Activated T-helper 2 cell treated with anti-CD3 and anti-CD28 coated beads, Interferon-gamma antibody, Interleukin-2, Interleukin-4, amounts not matched to agents 10 μg/mL and 5 μg/mL and 100 μg/mL, durations not matched to agents 14 hours and 24 hours and 36 hours (primary cell): ENCODE measurements at regions of chr1 and their contacts with region 1.

Region 1: DNA sequence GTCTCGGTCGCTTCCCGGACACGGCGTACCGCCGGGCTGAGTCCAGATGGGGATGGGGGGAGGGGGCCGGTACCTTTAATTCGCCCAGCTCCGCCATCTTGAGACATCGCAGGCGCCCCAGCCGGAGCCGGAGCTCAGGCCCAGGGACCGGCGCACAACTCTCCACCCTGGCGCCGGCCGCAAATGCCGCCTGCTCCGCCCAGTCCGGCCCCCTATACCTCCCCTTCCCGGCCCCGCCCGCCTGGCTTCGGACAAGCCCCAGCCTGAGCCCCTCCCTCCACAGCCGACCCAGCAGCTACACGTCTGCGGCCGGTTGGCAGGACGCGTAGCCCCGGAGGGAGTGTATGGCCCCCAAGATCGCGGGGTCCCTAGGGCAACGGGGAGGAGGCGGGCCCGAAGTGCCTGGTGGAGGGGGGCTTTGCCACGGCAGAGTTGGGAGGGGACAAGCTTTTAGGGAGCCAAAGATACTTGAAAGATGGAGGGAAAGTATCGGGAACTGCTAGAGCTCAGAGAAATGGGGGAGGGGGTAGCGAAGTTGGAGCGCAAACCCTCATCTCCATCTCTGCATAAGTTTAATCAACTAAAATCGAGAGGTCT is at the start of gene PIAS3:
- DNase-seq: peak; percentile 85
- H3K4me3 Mint-ChIP-seq: peak within 1 kb of the TSS; percentile 93
- H3K27ac Mint-ChIP-seq: peak within 1 kb of the TSS; percentile 89
- H3K4me1 Mint-ChIP-seq: peaks cover 11% of the 10 kb centered on the region
- H3K27me3 Mint-ChIP-seq: peaks cover 14% of the 10 kb centered on the region
- total RNA-seq, gene PIAS3: 21.1 and 21.3 TPM in 2 replicates

Region 2: DNA sequence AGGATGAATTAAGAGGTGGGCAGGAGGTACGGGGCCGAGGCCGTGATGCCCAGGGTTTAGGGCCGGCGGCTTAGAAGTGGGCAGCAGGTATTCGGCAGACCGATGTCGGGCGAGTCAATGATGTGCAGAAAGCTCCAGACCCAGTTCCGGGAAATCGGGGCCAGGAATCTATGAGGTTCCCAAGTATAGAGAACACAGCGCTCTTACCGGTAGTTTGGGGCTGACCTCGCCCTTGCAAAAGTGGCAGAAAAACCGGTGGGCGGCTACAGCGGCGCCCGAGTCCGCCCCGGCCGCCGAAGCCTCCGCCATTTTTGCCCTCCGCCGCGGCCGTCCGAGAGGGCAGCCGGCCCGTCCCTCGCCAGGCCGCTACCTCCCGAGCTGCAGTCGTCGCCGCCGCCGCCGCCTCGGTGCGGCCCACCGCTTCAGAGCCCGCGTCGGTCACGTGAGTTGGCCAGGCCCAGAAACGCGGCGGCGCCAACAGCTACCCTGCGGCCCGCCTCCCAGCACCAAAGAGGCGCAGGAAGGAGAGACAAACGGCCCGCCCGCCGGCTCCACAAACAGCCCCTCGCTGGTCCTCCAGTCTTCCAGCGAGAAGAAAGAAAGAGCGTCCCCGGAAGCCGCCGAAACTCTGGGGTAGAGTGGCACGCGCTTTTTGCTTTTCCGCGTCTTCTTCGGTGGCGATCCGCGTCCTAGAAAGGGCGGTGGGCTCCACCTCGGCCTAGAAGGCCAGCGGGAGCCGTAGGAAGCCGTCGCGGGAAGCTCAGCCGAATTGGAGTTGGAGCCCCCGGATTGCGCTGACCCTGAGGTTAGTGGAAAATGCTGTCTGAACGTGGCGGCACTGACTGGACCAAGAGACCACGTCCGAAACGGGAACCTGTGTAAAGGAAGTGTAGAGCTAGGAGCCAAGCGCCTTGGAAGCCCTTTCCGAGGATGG is 35.2 kb before region 1 on chr1 and contains the starts of genes POLR3C and RNF115:
- intact Hi-C with region 1: loop called (anchors 1 kb)
- DNase-seq: peak; percentile 86
- H3K4me3 Mint-ChIP-seq: peak within 1 kb of the TSS; percentile 99
- H3K27ac Mint-ChIP-seq: peak within 1 kb of the TSS; percentile 95
- H3K4me1 Mint-ChIP-seq: peaks cover 27% of the 10 kb centered on the region
- H3K27me3 Mint-ChIP-seq: no peaks in the 10 kb centered on the region
- total RNA-seq, gene POLR3C: 31.6 and 33.4 TPM in 2 replicates
- total RNA-seq, gene RNF115: 15.5 TPM in 2 replicates

Region 3: DNA sequence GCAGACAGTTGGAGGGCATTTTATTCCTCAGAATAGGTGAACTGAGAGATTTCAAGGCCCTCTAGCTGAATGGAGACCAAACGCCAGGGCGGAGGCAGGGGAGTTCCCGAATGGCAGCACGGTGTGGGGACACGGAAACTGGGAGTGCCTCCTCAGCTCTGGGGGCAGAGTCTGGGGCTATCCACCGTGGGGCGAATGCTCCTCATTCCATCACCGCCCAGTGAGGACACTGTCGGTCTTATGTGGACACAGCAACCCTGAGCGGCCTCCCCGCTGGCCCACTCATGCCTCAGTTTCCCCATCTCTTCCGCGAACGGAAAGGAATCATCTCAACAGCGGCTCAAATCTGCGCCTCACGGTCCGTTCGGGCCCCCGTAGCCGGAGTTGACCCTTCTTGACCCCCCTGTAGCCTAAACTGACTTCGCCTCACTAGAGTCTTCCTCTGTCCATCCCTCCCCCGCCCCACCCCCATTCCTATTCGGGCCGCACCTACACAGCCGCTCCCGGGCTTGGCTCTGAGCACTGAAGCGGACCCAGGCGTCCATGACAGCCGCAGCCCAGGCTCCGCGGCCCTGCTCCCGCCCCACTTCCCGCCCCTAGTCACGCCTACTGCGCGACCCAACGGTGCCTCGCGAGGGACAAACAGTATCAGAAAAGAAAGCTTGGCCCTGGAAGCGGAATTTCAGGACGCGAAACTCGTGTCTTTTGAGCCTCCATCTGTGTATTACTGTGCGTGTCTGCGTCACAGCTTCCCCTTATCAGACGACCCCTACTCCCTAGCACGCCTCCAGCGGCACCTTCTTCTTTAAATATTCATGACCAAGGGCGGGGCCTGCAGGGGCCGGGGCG is 59.4 kb after region 1 on chr1 and contains the start of gene PEX11B:
- intact Hi-C with region 1: loop called (anchors 2 kb)
- DNase-seq: peak; percentile 88
- H3K4me3 Mint-ChIP-seq: peak within 1 kb of the TSS; percentile 88
- H3K27ac Mint-ChIP-seq: peak within 1 kb of the TSS; percentile 92
- H3K4me1 Mint-ChIP-seq: peaks cover 35% of the 10 kb centered on the region
- H3K27me3 Mint-ChIP-seq: no peaks in the 10 kb centered on the region
- total RNA-seq, gene PEX11B: 22.1 and 23.4 TPM in 2 replicates

Region 4: GRCh38 chr1:145936247-145936646 is 77.3 kb after region 1 on chr1:
- intact Hi-C with region 1: no loop called
- DNase-seq: no peak
- H3K4me3 Mint-ChIP-seq: no peak overlapping the region
- H3K27ac Mint-ChIP-seq: no peak overlapping the region
- H3K4me1 Mint-ChIP-seq: peaks cover 16% of the 10 kb centered on the region
- H3K27me3 Mint-ChIP-seq: no peaks in the 10 kb centered on the region